Astrocyte of the cerebellum (primary cell): ENCODE measurements at regions of chr17 and their contacts with region 1.

Region 1: DNA sequence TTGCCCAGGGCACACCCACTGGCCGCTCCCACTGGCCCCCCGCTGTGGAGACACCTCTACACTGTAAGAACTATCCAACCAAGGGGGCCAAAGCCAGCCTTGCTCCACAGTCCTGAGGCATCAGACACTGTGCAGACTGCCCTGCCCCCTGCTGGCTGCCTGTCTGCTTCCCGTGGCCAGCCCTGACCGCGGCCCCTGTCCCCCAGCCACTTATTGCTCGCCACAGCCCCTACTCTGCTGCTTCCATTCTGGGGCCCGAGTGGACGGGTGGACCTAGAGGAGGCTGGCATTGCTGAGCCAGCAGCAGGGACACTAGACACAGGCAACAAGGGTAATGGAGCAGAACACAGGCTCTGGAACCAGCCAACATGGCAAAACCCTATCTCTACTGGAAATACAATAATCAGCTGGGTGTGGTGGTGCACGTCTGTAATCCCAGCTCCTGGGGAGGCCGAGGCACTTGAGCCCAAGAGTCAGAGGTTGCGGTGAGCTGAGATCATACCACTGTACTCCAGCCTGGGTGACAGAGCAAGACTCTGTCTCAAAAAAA is 19.7 kb upstream of the LRRC37A3 start:
- DNase-seq: no peak
- H3K4me3 ChIP-seq: no peak overlapping the region
- CTCF ChIP-seq: peak; percentile 41

Region 2: DNA sequence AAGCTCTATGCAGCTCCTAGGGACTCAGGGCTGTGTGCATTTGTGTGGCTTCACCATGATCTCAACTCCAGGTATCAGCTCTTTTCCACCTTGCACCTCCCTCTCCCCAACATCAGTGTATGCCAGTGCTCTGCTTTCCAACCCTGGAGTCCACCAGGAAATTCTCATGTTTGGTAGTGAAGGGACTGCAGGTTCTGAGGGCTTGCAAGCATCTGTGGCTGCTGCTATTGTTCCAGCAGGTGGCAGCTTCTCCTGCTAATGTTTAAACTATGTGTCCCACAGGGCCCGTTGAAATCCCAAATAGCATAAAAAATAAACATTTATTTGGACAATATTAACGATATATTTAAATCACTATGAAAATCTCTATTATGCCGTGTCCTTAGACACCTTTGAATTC is 280.1 kb after region 1 on chr17:
- in situ Hi-C with region 1: loop called (anchors 25 kb)
- DNase-seq: no peak
- H3K4me3 ChIP-seq: no peak overlapping the region
- CTCF ChIP-seq: peak; percentile 32

Region 3: DNA sequence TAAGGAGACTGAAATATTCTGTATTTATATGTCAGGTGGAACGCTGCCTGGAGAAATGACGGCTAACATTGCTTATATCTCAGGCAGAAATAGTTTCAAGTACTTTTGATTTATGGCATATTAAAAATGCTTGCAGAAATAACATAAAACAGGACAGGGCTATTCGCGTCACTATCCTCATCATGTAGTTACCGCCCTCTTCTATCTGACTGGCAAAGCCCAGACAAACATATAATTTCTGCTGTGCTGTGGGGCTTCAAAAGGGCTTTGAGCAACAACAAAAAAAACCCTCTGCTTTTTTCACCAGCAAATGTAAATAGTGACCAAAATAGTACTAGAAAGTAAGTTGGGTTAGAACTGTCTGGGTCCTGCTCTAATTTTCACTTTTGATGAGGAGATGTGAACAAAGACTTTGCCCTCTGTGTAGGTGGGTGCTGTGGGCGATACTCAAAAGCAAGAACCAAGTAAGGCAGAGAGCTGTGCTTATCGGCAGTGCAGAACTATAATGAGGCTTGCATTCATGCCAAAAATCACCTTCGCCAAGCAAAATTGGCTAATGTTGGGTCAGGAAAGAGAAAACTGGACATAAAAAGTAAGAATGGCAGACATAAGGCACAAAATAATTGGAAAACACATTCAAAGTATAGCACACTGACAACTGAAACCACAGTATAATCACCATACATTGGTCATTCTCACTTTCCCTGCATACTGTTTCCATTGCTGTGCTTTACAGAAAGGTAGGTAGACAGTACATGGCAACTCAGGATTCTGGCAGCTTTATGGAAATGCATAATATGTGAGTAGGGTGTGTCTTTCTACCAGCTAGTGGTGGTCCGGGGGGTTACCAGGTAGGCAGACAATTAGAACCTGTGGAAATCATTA is 773.6 kb after region 1 on chr17:
- in situ Hi-C with region 1: no loop called
- DNase-seq: no peak
- H3K4me3 ChIP-seq: no peak overlapping the region
- CTCF ChIP-seq: no peak